Heart left ventricle (tissue), 16 donors: ENCODE measurements at regions of chr4 and their contacts with region 1.

Region 1: GRCh38 chr4:105887508-105887907 is 7.8 kb upstream of the NPNT start:
- DNase-seq: no peak
- ATAC-seq: no peak
- H3K4me3 ChIP-seq: no peak overlapping the region
- H3K27ac ChIP-seq: no peak overlapping the region
- H3K4me1 ChIP-seq: no peaks in the 10 kb centered on the region
- H3K27me3 ChIP-seq: no peaks in the 10 kb centered on the region
- CTCF ChIP-seq: no peak
- POLR2A ChIP-seq: no peak

Region 2: GRCh38 chr4:105369988-105370387 is 517.5 kb before region 1 on chr4:
- intact Hi-C with region 1: loop called in 1 of 10 experiments (anchors 10 kb)
- DNase-seq: no peak
- ATAC-seq: no peak
- H3K4me3 ChIP-seq: no peak overlapping the region
- H3K27ac ChIP-seq: no peak overlapping the region
- H3K4me1 ChIP-seq: peaks cover 0 to 17% (median 0%) of the 10 kb centered on the region in 12 donors
- H3K27me3 ChIP-seq: no peaks in the 10 kb centered on the region
- CTCF ChIP-seq: no peak
- POLR2A ChIP-seq: no peak

Region 3: DNA sequence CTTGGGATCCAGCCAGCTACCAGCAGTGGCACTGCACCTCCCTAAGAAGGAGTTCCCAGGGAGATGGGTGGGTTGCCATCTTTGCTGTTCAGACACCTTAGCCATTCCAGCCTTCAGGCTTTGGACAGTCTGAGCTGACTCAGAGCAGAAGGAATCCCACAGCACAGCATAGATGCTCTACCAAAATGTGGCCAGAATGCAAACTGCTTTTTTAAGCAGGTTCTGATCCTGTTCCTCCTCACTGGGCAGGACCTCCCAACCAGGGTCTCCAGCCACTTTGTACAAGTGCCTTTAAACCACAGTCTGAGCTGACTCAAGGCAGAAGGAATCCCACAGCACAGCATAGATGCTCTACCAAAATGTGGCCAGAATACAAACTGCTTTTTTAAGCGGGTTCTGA is 216.8 kb after region 1 on chr4:
- intact Hi-C with region 1: no loop called
- DNase-seq: no peak
- ATAC-seq: no peak
- H3K4me3 ChIP-seq: no peak overlapping the region
- H3K27ac ChIP-seq: no peak overlapping the region
- H3K4me1 ChIP-seq: no peaks in the 10 kb centered on the region
- H3K27me3 ChIP-seq: no peaks in the 10 kb centered on the region
- CTCF ChIP-seq: no peak
- POLR2A ChIP-seq: no peak